ENCODE measurements at regions of chr9 and their contacts with region 1.

Region 1: GRCh38 chr9:122498883-122499288 is 11.7 kb upstream of the OR1J2 start:
- DNase-seq: peak in 1 of 3 donors; percentile 14
- ATAC-seq: peak; percentile 55
- H3K4me3 ChIP-seq: no peak overlapping the region
- H3K4me1 ChIP-seq: no peaks in the 10 kb centered on the region
- CTCF ChIP-seq: peak; percentile 79

Region 2: GRCh38 chr9:122426723-122427122 is 72.2 kb before region 1 on chr9:
- intact Hi-C with region 1: no loop called
- DNase-seq: no peak
- ATAC-seq: no peak
- H3K4me3 ChIP-seq: no peak overlapping the region
- H3K4me1 ChIP-seq: no peaks in the 10 kb centered on the region
- CTCF ChIP-seq: no peak

Region 3: DNA sequence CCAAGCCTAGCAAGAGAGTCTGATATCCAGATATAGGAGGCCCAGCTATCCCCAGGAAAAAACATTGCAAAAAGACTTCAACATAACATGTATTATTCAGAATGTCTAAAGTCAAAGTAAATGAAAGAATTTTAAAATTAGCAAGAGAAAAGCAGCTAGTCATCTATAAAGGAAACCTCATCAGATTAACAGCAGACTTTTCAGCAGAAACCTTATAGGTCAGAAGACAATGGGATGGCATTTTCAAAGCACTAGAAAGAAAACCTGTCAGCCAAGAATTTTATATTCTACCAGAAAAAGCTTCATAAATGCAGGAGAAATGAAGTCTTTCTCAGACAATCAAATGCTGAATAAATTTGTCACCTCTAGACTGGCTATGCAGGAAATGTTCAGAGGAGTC is 186.0 kb after region 1 on chr9:
- intact Hi-C with region 1: no loop called
- DNase-seq: no peak
- ATAC-seq: no peak
- H3K4me3 ChIP-seq: no peak overlapping the region
- H3K4me1 ChIP-seq: no peaks in the 10 kb centered on the region
- CTCF ChIP-seq: no peak

Region 4: DNA sequence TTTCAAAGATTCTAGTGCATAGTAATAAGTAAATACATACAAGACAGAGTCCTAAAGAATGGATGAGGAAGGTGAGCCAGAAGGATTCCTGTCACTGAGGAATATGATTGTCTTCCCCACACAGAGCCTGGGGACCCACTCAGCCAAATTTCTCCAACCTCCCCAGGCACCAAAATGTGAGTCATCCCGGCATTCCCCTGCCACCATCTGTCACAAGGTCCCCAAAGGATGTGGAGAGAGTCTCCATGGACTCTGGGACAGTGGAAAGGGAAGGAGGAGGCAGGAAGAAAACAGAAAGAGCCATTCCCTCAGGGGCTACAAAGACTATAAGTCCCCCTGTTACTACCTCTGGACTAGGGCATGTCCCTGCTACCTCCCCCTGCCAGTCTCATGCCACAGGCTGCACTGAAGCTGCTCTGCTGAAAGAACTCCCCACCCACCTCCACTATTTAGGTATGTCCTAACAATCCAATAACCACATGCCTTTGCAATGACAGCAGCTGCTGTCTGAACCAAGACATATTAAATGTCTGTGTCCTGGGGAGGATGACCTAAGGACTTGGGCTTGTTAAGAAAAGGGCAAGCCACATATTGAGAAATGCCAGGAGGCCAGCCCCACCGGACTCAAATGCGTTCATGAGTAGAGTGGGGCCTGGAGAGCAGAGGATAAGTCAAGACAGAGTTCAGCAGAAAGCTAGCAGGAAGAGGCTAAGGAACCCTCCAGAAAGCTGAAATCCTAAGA is 279.2 kb after region 1 on chr9:
- intact Hi-C with region 1: loop called in 1 of 2 experiments (anchors 10 kb)
- DNase-seq: no peak
- ATAC-seq: no peak
- H3K4me3 ChIP-seq: no peak overlapping the region
- H3K4me1 ChIP-seq: no peaks in the 10 kb centered on the region
- CTCF ChIP-seq: no peak

Measured in mucosa of descending colon (tissue), 3 donors.